Activated CD4-positive, alpha-beta T cell treated with anti-CD3 and anti-CD28 coated beads for 36 hours (primary cell): ENCODE measurements at regions of chr17 and their contacts with region 1.

Region 1: DNA sequence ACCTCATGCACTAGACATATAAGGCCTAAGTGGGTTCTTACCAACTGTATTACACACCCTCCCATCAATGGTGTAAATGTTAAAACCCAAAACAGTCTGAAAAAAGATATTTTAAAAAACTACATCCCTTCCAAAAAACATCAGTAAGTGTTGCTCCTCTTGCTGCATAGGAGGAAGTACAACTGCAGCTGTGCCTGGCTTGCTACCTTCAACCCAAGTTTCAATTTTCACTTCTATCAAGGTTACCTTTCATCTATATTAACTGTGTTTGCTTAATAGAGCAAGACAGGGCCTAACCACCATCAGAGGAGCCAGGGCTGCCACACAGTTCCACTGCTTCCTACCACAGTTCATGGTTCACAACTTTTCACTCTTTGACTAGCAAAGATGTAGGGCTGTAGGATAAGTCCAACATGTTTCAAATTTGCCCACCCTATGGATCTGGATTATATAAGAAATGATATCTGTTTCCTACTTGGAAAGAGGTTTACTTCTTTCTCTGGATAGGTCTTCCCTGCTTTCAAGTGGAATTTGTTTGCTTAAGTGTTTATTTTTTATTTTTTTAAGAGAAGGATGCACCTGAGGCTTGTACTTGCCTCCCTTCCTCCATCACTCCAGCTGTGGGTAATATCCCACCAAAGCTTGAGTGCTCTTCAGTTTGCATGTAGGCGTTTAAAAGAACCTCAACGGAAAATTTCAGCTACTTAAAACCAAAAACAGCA is 56.7 kb downstream of the GRB7 start:
- DNase-seq: peak; percentile 33
- ATAC-seq: peak; percentile 14
- H3K4me3 Mint-ChIP-seq: no peak overlapping the region
- H3K27ac Mint-ChIP-seq: peak overlapping the region; percentile 82
- H3K4me1 Mint-ChIP-seq: peaks cover 76% of the 10 kb centered on the region
- H3K27me3 Mint-ChIP-seq: no peaks in the 10 kb centered on the region

Region 2: DNA sequence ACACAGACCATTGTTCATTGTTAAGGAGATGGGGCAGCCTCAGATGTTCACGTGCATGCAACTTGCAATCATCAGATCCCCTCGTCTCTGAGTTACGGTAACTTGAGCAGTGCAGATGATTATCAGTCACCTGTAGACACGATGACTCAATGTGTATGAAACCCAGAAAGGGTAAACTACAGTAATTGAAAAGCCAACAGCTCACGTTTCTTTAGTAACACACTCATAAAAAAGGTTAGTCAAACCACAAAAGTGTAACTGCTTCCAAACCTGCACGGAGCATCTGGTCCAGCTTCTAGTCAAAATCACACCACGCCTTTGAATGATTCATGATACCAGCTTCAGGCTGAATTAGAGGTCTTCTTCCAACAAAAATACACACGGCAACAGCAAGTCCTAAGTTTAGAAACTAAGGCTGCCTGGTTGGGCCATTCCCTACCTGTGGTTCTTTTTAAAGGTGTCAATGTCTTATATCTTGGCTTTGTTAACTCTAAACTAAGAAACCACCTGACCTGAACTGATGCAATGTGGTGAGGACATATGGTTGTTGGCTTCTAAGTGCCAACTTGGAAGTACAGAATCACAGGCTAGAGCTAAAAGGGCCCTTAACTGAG is 24.3 kb before region 1 on chr17:
- CTCF ChIA-PET with region 1: interaction called, 5 read pairs
- POLR2A ChIA-PET with region 1: interaction called, 17 read pairs
- intact Hi-C with region 1: loop called (anchors 1 kb)
- DNase-seq: peak; percentile 78
- ATAC-seq: peak; percentile 80
- H3K4me3 Mint-ChIP-seq: peak overlapping the region; percentile 7
- H3K27ac Mint-ChIP-seq: peak overlapping the region; percentile 82
- H3K4me1 Mint-ChIP-seq: peaks cover 96% of the 10 kb centered on the region
- H3K27me3 Mint-ChIP-seq: no peaks in the 10 kb centered on the region

Region 3: DNA sequence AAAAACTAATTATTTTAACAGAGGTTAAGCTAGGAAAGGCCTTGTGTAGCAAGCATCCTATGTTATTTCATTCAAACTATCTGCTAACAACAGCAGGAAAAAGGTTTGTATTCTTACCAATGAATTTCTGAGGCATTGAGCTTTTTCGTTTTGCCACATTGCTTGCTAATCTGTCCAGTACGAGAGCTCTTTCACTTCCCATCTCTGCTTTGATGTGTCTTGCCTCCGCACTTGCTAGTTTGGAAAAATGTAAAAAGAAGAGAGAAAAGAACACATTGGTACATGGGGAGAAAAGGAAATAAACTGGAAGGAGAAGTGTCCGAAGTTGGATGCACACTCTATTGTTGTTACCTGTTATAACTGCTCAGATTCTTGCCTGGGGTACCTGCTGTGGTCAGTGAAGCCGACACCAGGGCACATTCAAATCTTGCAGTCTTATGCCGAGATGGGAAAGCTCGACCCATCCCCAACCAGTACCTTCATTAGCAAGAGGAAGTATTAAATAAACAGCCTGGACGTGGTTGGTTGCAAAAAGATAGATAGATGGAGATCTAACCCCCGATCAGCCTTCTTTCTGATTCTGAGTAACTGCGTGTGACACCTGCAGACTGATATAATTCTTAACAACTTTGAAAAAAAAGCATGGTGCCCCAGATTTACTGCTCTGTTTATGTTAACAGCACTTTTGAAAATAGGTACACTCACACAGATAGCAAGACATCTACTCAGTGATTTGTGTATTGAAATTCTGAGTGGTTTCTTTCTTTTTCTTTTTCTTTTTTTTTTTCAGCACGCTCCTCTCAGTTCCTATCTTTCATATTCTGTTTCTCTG is 16.7 kb before region 1 on chr17:
- CTCF ChIA-PET with region 1: interaction called, 10 read pairs
- POLR2A ChIA-PET with region 1: interaction called, 6 read pairs
- intact Hi-C with region 1: loop called (anchors 1 kb)
- DNase-seq: no peak
- ATAC-seq: peak; percentile 76
- H3K4me3 Mint-ChIP-seq: peak overlapping the region; percentile 72
- H3K27ac Mint-ChIP-seq: peak overlapping the region; percentile 95
- H3K4me1 Mint-ChIP-seq: peaks cover 87% of the 10 kb centered on the region
- H3K27me3 Mint-ChIP-seq: no peaks in the 10 kb centered on the region

Region 4: DNA sequence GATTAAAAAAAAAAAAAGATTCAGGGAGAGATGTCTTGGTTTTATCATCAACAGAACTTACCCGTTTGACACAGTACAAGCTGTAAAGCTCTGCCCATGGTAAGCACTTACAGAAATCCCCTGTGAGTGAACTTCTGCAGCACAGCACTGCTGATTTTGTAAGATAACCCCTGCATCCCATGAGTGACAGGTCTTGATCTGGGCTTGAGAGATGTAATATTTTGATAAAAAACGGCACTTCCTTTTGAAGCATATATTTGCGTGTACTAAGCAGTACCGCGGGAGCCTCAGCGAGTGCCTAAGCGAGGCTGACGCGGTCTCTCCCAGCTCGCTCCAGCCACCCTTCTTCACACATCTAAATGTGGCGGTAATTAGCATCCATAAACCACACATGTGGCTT is 19.2 kb after region 1 on chr17:
- CTCF ChIA-PET with region 1: interaction called, 7 read pairs
- POLR2A ChIA-PET with region 1: interaction called, 4 read pairs
- intact Hi-C with region 1: loop called (anchors 1 to 2 kb)
- DNase-seq: peak; percentile 66
- ATAC-seq: peak; percentile 90
- H3K4me3 Mint-ChIP-seq: peak overlapping the region; percentile 70
- H3K27ac Mint-ChIP-seq: peak overlapping the region; percentile 85
- H3K4me1 Mint-ChIP-seq: peaks cover 59% of the 10 kb centered on the region
- H3K27me3 Mint-ChIP-seq: no peaks in the 10 kb centered on the region

Region 5: GRCh38 chr17:39822051-39822451 is 27.6 kb after region 1 on chr17:
- CTCF ChIA-PET with region 1: interaction called, 7 read pairs
- POLR2A ChIA-PET with region 1: interaction called, 6 read pairs
- intact Hi-C with region 1: loop called (anchors 1 to 2 kb)
- DNase-seq: peak; percentile 41
- ATAC-seq: peak; percentile 36
- H3K4me3 Mint-ChIP-seq: no peak overlapping the region
- H3K27ac Mint-ChIP-seq: peak overlapping the region; percentile 42
- H3K4me1 Mint-ChIP-seq: peaks cover 57% of the 10 kb centered on the region
- H3K27me3 Mint-ChIP-seq: no peaks in the 10 kb centered on the region